GM10248 (cell line): ENCODE measurements at regions of chr13 and their contacts with region 1.

Region 1: DNA sequence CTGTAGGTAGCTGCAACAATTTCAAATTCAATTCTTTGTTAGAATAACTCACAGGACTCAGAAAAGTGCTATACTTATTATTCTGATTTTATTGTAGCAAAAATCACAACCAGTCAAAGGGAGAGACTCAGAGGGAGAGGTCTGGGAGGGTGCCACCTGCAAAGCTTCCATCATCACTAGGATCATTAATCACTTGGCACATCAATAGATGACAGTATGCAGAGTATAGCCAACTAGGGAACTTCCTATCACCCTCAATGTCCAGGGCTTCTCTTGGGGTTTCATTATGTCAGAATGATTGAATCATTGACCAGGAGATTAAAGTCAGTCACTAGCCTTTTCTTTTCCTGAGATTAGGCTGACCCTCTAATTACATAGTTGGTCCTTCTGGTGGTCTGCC is 431.3 kb upstream of the ATXN8OS start:
- DNase-seq: no peak
- CTCF ChIP-seq: no peak

Region 2: DNA sequence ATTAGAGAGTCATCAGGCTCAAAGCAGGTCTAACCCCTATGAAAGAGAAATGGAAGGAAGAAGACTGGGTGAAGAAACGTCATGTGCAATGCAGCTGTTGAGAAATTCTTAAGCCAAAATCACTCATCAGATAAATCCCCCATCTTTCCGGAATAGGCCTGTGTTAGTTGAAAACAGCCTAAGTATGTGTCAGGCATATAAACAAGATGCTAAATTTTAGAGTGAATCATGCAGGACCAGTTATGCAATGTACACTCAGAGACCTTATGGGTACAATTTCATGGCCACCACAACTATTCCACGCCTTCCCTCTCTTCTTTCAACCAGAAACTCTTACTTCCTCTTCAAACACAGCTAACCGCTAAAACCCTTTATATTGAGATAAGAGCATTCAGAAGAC is 286.4 kb before region 1 on chr13:
- CTCF ChIA-PET with region 1: no interaction called
- POLR2A ChIA-PET with region 1: no interaction called
- DNase-seq: no peak
- CTCF ChIP-seq: no peak

Region 3: GRCh38 chr13:69660155-69660554 is 16.1 kb before region 1 on chr13:
- CTCF ChIA-PET with region 1: no interaction called
- POLR2A ChIA-PET with region 1: no interaction called
- DNase-seq: no peak
- CTCF ChIP-seq: no peak

Region 4: GRCh38 chr13:69690999-69691398 is 14.7 kb after region 1 on chr13:
- CTCF ChIA-PET with region 1: interaction called, 18 read pairs
- POLR2A ChIA-PET with region 1: no interaction called
- DNase-seq: no peak
- CTCF ChIP-seq: no peak

Region 5: GRCh38 chr13:69793783-69794453 is 117.6 kb after region 1 on chr13:
- CTCF ChIA-PET with region 1: no interaction called
- POLR2A ChIA-PET with region 1: no interaction called
- DNase-seq: no peak
- CTCF ChIP-seq: no peak